HEK293 (cell line): ENCODE measurements at regions of chr6 and their contacts with region 1.

Region 1: DNA sequence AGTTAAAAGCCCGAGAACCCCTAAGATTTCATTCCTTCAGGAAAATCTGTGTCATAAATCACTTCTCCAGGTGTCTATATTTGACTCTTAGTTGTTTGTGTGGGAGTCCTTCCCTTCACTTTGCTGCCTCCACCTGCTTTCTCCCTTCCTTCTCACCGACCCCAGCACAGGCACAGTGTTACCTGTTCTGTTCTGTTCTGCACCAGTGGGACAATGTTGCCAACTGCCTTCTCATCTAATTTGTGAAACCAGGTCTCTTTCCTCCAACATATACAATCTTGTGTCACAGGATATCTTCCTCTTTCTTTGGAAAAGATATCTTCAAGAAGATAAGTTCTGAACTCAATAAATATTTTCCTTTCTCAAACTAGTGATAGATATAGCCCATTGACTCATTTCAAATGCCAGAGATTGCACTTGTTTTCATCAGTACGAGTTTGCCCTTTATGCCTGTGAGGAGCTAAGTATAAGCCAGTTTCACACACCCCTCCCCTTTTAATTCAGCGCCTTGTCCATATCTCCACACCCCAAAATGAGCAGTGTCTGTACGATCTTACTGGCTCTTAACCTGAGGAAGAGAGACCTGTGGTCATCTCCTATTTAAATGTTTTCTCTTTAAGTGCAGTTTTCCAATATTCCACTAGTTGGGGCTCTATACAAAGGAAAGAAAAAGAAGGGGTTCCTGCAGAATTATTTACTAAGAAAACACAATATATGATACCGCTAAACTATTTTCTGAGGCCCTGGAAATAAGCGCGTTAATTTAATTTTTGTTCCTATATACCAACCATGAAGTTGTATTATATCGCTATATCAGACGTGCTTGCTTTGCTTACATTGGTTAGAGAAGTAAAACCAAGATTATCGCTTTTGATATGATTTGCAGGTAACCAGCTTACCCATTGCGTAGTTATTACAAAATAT is 81.6 kb upstream of the PREP start:
- H3K4me3 ChIP-seq: no peak overlapping the region
- H3K27ac ChIP-seq: no peak overlapping the region
- H3K4me1 ChIP-seq: peaks cover 16% of the 10 kb centered on the region
- CTCF ChIP-seq: peak; percentile 50; the same call in 1 of the 2 replicates

Region 2: DNA sequence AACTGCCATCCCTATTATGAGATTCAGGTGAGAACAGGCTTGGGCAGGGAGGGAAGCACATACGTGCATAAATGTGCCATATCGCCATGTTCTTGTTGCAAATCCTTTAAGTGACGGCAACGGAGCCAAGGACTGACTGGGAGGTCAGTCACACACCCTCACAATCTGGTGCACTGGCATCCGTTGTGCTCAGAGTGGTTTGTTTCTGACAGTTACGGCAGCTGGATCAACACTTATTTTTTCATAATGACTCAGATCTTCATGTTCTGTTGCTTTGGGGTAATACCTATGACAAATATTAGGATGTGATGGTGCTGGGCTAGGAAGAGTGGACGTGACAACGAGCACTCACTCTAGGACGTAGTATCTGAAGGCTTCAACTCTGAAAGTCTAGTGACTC is 25.5 kb before region 1 on chr6:
- CTCF ChIA-PET with region 1: no interaction called
- POLR2A ChIA-PET with region 1: no interaction called
- H3K4me3 ChIP-seq: no peak overlapping the region
- H3K27ac ChIP-seq: no peak overlapping the region
- H3K4me1 ChIP-seq: no peaks in the 10 kb centered on the region
- CTCF ChIP-seq: no peak

Region 3: DNA sequence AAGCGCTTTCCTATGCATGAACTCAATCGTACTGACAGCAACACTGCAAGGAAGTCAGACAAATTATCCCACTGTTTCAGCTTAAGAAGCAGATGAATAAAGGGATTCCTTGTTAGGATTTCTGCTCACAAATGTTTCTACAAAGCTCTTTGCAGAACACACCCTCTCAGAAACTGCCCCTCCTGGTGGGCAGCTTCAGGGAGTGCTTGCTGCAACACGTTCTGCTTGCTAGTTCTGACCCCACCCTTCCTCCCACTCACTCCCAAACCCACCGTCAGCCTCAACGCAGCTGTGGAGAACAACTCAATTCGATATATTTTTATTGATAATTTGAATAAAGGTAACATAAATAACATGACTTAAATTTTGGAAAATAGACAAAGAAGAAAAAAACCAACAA is 350.9 kb after region 1 on chr6:
- CTCF ChIA-PET with region 1: interaction called, 10 read pairs
- POLR2A ChIA-PET with region 1: no interaction called
- H3K4me3 ChIP-seq: no peak overlapping the region
- H3K27ac ChIP-seq: no peak overlapping the region
- H3K4me1 ChIP-seq: no peaks in the 10 kb centered on the region
- CTCF ChIP-seq: 0 out of 2 replicates have a peak, but pooled peaks have one; percentile 20

Region 4: DNA sequence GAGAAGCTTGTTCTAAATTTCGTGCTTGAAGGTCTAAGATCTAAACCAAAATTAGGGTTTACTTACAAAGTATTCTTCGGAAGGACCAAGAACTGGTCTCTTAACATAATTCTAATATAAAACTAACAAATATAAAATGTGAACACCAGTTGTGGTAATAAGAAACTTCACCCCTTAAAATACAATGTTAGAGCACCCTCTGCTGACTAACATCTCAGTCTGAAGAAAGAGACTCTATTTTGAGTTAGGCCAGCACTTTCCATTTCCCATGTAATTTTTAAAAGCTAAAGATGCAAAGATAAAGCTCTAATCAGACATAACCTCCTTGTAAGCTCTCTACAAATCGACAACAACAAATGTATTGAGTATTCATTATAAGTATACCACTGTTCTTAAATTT is 816.4 kb after region 1 on chr6:
- CTCF ChIA-PET with region 1: interaction called, 13 read pairs
- POLR2A ChIA-PET with region 1: no interaction called
- H3K4me3 ChIP-seq: no peak overlapping the region
- H3K27ac ChIP-seq: no peak overlapping the region
- H3K4me1 ChIP-seq: no peaks in the 10 kb centered on the region
- CTCF ChIP-seq: no peak